Posterior vena cava (tissue), 2 donors: ENCODE measurements at regions of chr7 and their contacts with region 1.

Region 1: GRCh38 chr7:156257904-156258303 is 382.7 kb upstream of the RNF32 start:
- DNase-seq: no peak

Region 2: DNA sequence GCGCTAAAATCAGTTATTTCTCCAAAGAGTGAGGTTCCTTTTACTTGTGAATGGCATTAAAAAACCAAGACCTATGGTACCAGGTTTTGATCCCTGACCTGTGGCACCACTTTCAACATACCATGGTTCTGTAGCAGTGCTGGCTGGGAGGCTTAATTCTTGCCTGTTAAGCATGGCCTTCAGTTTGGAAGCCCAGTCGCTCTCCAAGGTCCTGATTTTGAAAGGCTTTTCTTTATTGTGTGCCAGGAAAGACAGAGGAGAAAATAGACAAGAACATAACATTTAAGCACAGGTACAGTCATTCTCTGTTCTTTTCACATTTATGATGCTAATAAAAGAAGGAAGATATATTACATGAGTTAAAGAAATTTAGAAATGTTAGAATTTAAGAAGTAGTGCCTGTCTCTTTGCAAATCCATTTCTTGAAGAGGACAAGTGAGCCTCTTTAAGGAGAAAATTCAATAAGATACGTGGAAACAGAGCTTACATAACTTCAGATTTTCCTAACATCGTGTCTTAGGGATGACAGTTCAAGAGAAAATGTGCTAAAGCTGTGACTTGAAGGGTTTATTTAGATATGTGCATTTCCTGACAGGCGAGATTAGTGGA is 1848.1 kb before region 1 on chr7:
- intact Hi-C with region 1: loop called in 1 of 2 experiments (anchors 5 kb)
- DNase-seq: no peak

Region 3: GRCh38 chr7:156735851-156736250 is 477.9 kb after region 1 on chr7:
- intact Hi-C with region 1: no loop called
- DNase-seq: no peak